MCF 10A (cell line): ENCODE measurements at regions of chr17 and their contacts with region 1.

Region 1: DNA sequence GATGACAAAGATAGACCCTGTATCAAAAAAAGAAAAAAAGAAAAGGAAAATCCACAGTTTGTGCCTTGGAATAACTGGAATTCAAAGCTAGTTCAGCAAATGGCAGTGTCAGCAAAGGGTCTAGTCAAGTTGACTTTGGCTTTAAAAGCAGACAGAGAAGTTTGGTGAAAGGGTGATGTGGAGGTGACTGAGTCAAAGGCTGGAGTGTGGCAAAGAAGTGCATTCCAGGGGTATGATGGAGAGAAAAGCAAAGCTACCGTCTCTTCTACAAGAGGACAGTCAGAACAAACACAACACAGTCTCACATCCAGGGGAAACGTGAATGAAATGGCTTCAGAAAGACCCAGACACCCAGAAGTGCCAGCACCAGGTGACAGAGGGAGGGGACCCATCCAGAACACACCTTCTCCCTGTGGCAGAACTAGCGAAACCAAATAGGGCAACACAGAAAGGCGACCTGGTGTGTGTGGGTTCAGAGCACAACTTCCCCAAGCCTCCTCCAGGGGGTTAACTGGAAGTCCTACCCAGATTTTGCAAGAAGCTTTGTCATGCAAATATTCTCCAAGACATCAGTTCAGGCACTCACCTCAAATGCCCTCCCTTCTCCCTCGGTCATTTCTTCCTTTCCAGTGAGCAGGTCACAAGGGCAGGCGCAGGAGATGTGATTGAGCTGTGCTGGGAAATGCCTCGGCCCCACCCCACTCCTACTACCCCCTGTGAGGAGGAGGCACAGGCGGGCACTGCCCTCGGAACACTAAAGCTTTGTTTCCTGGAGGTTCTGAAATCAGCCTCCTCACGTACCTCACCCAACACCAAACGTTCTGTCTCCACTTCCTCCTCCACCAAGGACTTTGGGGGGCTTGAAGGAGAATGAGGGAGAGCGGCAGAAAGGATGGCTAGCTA is 481.9 kb downstream of the SOX9 start:
- DNase-seq: peak; percentile 91
- H3K4me3 Mint-ChIP-seq: peak overlapping the region; percentile 34
- H3K27ac Mint-ChIP-seq: peak overlapping the region; percentile 85
- H3K4me1 Mint-ChIP-seq: peaks cover 45% of the 10 kb centered on the region
- H3K27me3 Mint-ChIP-seq: no peaks in the 10 kb centered on the region
- CTCF ChIP-seq: peak; percentile 36

Region 2: GRCh38 chr17:72614871-72615626 is 12.3 kb after region 1 on chr17:
- CTCF ChIA-PET with region 1: interaction called, 4 read pairs
- POLR2A ChIA-PET with region 1: interaction called, 19 read pairs
- intact Hi-C with region 1: no loop called
- DNase-seq: no peak
- H3K4me3 Mint-ChIP-seq: peak overlapping the region; percentile 29
- H3K27ac Mint-ChIP-seq: peak overlapping the region; percentile 73
- H3K4me1 Mint-ChIP-seq: peaks cover 34% of the 10 kb centered on the region
- H3K27me3 Mint-ChIP-seq: no peaks in the 10 kb centered on the region
- CTCF ChIP-seq: no peak

Region 3: DNA sequence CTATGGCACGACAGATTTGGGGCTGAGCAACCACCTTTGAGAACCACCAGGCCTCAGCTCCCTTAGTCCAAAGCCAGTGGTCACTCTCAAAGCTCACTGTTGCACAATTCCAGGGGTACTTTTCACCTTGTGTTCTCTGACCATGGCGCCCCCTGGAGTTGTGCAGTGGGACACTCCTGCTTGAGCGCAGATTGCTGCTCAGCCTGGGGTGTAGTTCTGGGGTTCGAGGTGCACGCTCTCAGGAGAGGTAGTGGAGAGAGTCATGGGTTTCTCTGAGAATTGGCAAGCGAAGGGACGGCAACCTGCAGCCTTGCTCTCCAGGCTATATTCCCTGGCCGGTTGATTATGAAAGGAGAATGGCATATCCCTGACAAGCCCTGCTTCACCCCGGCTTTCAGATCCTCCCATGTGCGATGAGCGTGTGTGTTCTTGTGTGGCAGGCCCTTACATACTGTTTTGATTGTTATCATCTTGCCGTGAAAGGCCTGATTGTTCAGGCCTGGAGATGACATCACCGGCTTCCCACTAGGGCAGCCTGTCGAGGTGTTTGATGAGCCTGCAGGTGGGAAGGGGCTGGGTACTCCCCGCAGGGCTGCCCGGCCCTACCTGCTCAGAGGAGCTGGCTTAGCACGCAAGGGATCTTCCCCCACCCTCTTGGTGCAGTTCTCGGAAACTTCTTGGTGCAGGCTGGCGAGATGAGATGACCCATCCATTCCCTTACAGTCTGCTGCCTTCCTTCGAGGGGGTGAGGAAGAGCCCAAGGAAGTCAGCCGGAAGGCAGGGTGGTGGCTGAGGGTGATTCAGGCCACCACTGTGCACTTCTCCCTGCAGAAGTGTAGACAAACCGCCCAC is 58.6 kb after region 1 on chr17:
- CTCF ChIA-PET with region 1: no interaction called
- POLR2A ChIA-PET with region 1: no interaction called
- intact Hi-C with region 1: no loop called
- DNase-seq: peak; percentile 78
- H3K4me3 Mint-ChIP-seq: no peak overlapping the region
- H3K27ac Mint-ChIP-seq: peak overlapping the region; percentile 78
- H3K4me1 Mint-ChIP-seq: peaks cover 15% of the 10 kb centered on the region
- H3K27me3 Mint-ChIP-seq: no peaks in the 10 kb centered on the region
- CTCF ChIP-seq: peak; percentile 43